Posterior vena cava (tissue), 2 donors: ENCODE measurements at regions of chr21 and their contacts with region 1.

Region 1: GRCh38 chr21:46097336-46098293 is at the start of gene COL6A2:
- DNase-seq: peak; percentile 87
- total RNA-seq, gene COL6A2: 1,504 to 1,642 TPM

Region 2: GRCh38 chr21:46056450-46056903 is 41.1 kb before region 1 on chr21:
- intact Hi-C with region 1: loop called in 1 of 2 experiments (anchors 2 kb)
- DNase-seq: peak; percentile 97

Region 3: DNA sequence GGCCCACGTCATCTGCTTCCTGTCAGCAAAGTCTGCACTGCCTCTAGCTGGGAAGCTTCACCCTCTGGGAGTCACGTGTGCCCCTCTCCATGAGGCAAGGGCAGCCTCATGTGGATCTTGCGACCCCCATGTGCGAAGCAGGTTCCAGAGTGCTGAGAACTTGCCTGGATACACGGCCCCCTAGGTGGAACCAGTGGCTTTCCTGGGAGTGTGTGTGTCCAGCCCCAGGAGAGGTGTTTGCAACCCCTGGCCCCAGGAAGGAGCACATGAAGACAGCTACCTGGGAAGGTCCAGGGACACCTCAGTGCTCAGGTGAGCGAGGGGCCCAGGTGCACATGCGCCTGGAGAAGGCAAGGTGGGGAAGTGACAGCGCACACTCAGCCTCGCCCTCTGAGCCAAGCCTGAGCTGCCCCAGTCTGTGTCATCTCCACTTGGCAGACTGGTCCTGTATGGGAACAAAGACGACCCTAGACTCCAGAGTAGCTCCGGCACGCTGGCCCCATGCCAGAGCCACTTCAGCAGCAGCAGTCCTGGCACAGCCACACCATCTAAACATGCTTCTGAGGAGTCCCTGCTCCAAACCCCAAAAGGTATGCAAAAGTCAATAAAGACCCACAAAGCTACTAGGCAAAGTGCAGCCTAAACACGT is 122.1 kb after region 1 on chr21:
- intact Hi-C with region 1: no loop called
- DNase-seq: no peak